Activated CD4-positive, alpha-beta T cell treated with anti-CD3 and anti-CD28 coated beads for 36 hours (primary cell): ENCODE measurements at regions of chr7 and their contacts with region 1.

Region 1: GRCh38 chr7:4610768-4611467 is 71.2 kb upstream of the FOXK1 start:
- DNase-seq: peak; percentile 59
- ATAC-seq: peak; percentile 77
- H3K4me3 Mint-ChIP-seq: no peak overlapping the region
- H3K27ac Mint-ChIP-seq: no peak overlapping the region
- H3K4me1 Mint-ChIP-seq: peaks cover 14% of the 10 kb centered on the region
- H3K27me3 Mint-ChIP-seq: no peaks in the 10 kb centered on the region

Region 2: DNA sequence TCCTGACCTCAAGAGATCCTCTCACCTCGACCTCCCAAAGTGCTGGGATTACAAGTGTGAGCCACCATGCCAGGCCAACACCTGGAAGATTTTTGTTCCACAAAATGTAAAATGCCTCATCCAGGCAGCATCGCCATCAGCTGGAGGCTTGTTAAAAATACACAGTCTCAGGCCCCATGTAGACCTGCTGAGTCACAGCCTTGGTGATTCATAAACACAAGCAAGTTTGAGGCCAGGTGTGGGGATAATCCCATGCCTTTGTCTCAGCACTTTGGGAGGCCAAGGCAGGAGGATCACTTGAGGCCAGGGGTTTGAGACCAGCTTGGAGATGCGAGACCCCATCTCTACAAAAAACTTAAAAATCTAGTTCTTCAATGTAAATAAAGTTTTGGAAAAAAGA is 22.1 kb after region 1 on chr7:
- CTCF ChIA-PET with region 1: interaction called, 3 read pairs
- POLR2A ChIA-PET with region 1: no interaction called
- intact Hi-C with region 1: loop called in 1 of 2 experiments (anchors 1 kb)
- DNase-seq: peak; percentile 56
- ATAC-seq: peak; percentile 97
- H3K4me3 Mint-ChIP-seq: no peak overlapping the region
- H3K27ac Mint-ChIP-seq: no peak overlapping the region
- H3K4me1 Mint-ChIP-seq: no peaks in the 10 kb centered on the region
- H3K27me3 Mint-ChIP-seq: no peaks in the 10 kb centered on the region

Region 3: DNA sequence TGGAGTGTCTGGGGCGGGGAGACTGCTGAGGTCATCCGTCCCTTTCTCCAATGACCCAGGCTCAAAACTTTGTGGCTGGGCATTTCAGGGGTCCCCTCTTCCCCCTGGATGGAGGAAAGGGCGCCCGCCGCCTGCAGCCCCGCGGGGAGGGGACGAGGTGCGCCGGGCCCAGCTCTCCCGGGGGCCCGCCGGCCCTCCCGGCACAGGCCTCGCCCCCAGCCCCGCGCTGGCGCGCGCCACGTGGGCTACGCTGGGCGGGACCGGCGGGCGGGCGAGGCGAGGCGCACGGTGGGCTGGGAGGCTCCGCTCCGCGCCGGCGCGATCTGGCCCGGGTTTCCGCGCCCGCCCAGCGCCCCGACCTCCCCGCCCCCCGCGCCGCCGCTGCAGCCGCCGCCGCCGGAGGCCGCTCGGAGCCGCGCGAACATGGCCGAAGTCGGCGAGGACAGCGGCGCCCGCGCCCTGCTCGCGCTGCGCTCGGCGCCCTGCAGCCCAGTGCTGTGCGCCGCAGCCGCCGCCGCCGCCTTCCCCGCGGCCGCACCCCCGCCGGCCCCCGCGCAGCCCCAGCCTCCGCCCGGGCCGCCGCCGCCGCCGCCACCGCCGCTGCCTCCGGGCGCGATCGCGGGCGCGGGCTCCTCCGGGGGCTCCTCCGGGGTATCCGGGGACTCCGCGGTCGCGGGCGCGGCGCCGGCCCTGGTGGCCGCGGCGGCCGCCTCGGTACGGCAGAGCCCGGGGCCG is 71.1 kb after region 1 on chr7 and contains the start of gene FOXK1:
- CTCF ChIA-PET with region 1: interaction called, 3 read pairs
- POLR2A ChIA-PET with region 1: no interaction called
- intact Hi-C with region 1: loop called (anchors 1 to 2 kb)
- DNase-seq: peak; percentile 90
- ATAC-seq: peak; percentile 78
- H3K4me3 Mint-ChIP-seq: peak within 1 kb of the TSS; percentile 91
- H3K27ac Mint-ChIP-seq: peak within 1 kb of the TSS; percentile 98
- H3K4me1 Mint-ChIP-seq: peaks cover 30% of the 10 kb centered on the region
- H3K27me3 Mint-ChIP-seq: no peaks in the 10 kb centered on the region
- total RNA-seq, gene FOXK1: 30.0 to 33.9 TPM

Region 4: DNA sequence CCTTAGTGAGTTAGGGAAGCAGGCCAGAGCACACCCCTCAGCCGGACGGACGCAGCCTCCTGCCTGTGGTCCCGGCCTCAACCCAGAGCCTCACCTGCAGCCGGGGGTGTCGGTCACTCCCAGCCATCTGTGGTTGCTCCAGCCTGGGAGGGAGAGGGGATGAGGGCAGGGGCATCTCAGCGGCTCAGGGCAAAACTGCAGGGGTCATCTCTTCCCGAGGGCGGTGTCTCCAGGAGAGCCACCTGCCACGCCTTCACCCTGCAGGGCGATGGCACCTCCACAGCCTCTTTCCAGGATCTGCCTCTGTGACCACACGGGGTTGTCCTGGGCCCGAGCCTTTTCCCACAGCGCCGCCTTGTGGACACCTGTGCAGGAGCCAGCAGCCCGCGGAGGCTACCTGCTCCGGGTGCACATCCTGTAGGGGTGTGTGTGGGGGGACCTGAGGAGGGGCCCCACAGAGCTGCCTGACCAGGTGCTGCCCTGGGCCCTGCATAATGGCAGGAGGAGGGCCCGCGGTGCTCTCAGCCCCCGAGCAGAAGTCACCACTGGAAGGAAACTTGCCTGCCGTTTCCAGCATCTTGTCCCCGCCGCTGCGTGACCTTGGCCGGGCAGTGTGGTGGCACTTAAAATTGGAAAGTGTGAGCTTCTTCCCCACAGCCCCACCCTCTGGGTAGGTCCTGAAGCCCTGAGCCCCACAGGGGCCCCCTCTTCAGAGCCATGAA is 143.0 kb after region 1 on chr7:
- CTCF ChIA-PET with region 1: interaction called, 3 read pairs
- POLR2A ChIA-PET with region 1: no interaction called
- intact Hi-C with region 1: loop called (anchors 1 kb)
- DNase-seq: peak; percentile 94
- ATAC-seq: peak; percentile 97
- H3K4me3 Mint-ChIP-seq: no peak overlapping the region
- H3K27ac Mint-ChIP-seq: no peak overlapping the region
- H3K4me1 Mint-ChIP-seq: peaks cover 21% of the 10 kb centered on the region
- H3K27me3 Mint-ChIP-seq: no peaks in the 10 kb centered on the region